Adrenal gland (tissue), 19 donors: ENCODE measurements at regions of chr11 and their contacts with region 1.

Region 1: GRCh38 chr11:87421422-87421821 is 383.7 kb downstream of the TMEM135 start:
- DNase-seq: peak; percentile 44 to 73 (median 67)
- H3K4me3 ChIP-seq: no peak overlapping the region
- H3K27ac ChIP-seq: no peak overlapping the region
- H3K4me1 ChIP-seq: peaks cover 0 to 13% of the 10 kb centered on the region in 2 donors
- H3K27me3 ChIP-seq: no peaks in the 10 kb centered on the region
- CTCF ChIP-seq: peak; percentile 76 to 90 (median 82)
- POLR2A ChIP-seq: no peak

Region 2: GRCh38 chr11:86938900-86939880 is 482.2 kb before region 1 on chr11:
- intact Hi-C with region 1: loop called in 1 of 2 experiments (anchors 10 kb)
- DNase-seq: no peak
- H3K4me3 ChIP-seq: no peak overlapping the region
- H3K27ac ChIP-seq: peak overlapping the region in 4 of 5 donors; percentile 33 to 84 (median 70)
- H3K4me1 ChIP-seq: peaks cover 23 to 49% of the 10 kb centered on the region in 2 donors
- H3K27me3 ChIP-seq: no peaks in the 10 kb centered on the region
- CTCF ChIP-seq: peak; percentile 36 to 80 (median 72)
- POLR2A ChIP-seq: no peak

Region 3: GRCh38 chr11:87352759-87353707 is 68.4 kb before region 1 on chr11:
- intact Hi-C with region 1: loop called (anchors 2 to 10 kb)
- DNase-seq: peak; percentile 76 to 93 (median 86)
- H3K4me3 ChIP-seq: no peak overlapping the region
- H3K27ac ChIP-seq: no peak overlapping the region
- H3K4me1 ChIP-seq: peaks cover 0 to 10% of the 10 kb centered on the region in 2 donors
- H3K27me3 ChIP-seq: no peaks in the 10 kb centered on the region
- CTCF ChIP-seq: peak; percentile 99 to 100 (median 99)
- POLR2A ChIP-seq: no peak